HepG2 (cell line): ENCODE measurements at regions of chrX and their contacts with region 1.

Region 1: GRCh38 chrX:108537005-108537404 is 97.4 kb downstream of the COL4A5 start:
- DNase-seq: peak; percentile 22
- ATAC-seq: no peak
- H3K4me3 ChIP-seq: no peak overlapping the region
- H3K27ac ChIP-seq: no peak overlapping the region
- H3K4me1 ChIP-seq: no peaks in the 10 kb centered on the region
- H3K27me3 ChIP-seq: no peaks in the 10 kb centered on the region
- CTCF ChIP-seq: peak; percentile 62
- EP300 ChIP-seq: no peak
- POLR2A ChIP-seq: no peak
- RAD21 ChIP-seq: peak; percentile 40

Region 2: GRCh38 chrX:108224727-108225621 is 312.0 kb before region 1 on chrX:
- CTCF ChIA-PET with region 1: interaction called, 4 read pairs
- POLR2A ChIA-PET with region 1: no interaction called
- in situ Hi-C with region 1: loop called (anchors 10 kb)
- intact Hi-C with region 1: loop called (anchors 1 kb)
- DNase-seq: peak; percentile 37
- ATAC-seq: peak; percentile 64
- H3K4me3 ChIP-seq: no peak overlapping the region
- H3K27ac ChIP-seq: no peak overlapping the region
- H3K4me1 ChIP-seq: no peaks in the 10 kb centered on the region
- H3K27me3 ChIP-seq: no peaks in the 10 kb centered on the region
- CTCF ChIP-seq: peak; percentile 75
- EP300 ChIP-seq: no peak
- POLR2A ChIP-seq: no peak
- RAD21 ChIP-seq: 0 out of 2 replicates have a peak, but pooled peaks have one; percentile 36

Region 3: GRCh38 chrX:108292053-108292452 is 245.0 kb before region 1 on chrX:
- CTCF ChIA-PET with region 1: no interaction called
- POLR2A ChIA-PET with region 1: no interaction called
- in situ Hi-C with region 1: no loop called
- intact Hi-C with region 1: no loop called
- DNase-seq: no peak
- ATAC-seq: no peak
- H3K4me3 ChIP-seq: no peak overlapping the region
- H3K27ac ChIP-seq: no peak overlapping the region
- H3K4me1 ChIP-seq: peaks cover 6% of the 10 kb centered on the region
- H3K27me3 ChIP-seq: no peaks in the 10 kb centered on the region
- CTCF ChIP-seq: no peak
- EP300 ChIP-seq: no peak
- POLR2A ChIP-seq: no peak
- RAD21 ChIP-seq: no peak

Region 4: GRCh38 chrX:108304210-108304609 is 232.8 kb before region 1 on chrX:
- CTCF ChIA-PET with region 1: no interaction called
- POLR2A ChIA-PET with region 1: no interaction called
- in situ Hi-C with region 1: no loop called
- intact Hi-C with region 1: loop called (anchors 2 kb)
- DNase-seq: no peak
- ATAC-seq: no peak
- H3K4me3 ChIP-seq: no peak overlapping the region
- H3K27ac ChIP-seq: no peak overlapping the region
- H3K4me1 ChIP-seq: peaks cover 46% of the 10 kb centered on the region
- H3K27me3 ChIP-seq: no peaks in the 10 kb centered on the region
- CTCF ChIP-seq: peak; percentile 62
- EP300 ChIP-seq: no peak
- POLR2A ChIP-seq: no peak
- RAD21 ChIP-seq: no peak

Region 5: GRCh38 chrX:108601266-108601665 is 64.3 kb after region 1 on chrX:
- CTCF ChIA-PET with region 1: no interaction called
- POLR2A ChIA-PET with region 1: no interaction called
- in situ Hi-C with region 1: no loop called
- intact Hi-C with region 1: no loop called
- DNase-seq: no peak
- ATAC-seq: no peak
- H3K4me3 ChIP-seq: no peak overlapping the region
- H3K27ac ChIP-seq: no peak overlapping the region
- H3K4me1 ChIP-seq: no peaks in the 10 kb centered on the region
- H3K27me3 ChIP-seq: no peaks in the 10 kb centered on the region
- CTCF ChIP-seq: no peak
- EP300 ChIP-seq: no peak
- POLR2A ChIP-seq: no peak
- RAD21 ChIP-seq: no peak

Region 6: GRCh38 chrX:108641589-108642272 is 104.7 kb after region 1 on chrX:
- CTCF ChIA-PET with region 1: no interaction called
- POLR2A ChIA-PET with region 1: no interaction called
- in situ Hi-C with region 1: no loop called
- intact Hi-C with region 1: no loop called
- DNase-seq: no peak
- ATAC-seq: no peak
- H3K4me3 ChIP-seq: no peak overlapping the region
- H3K27ac ChIP-seq: no peak overlapping the region
- H3K4me1 ChIP-seq: no peaks in the 10 kb centered on the region
- H3K27me3 ChIP-seq: no peaks in the 10 kb centered on the region
- CTCF ChIP-seq: no peak
- EP300 ChIP-seq: no peak
- POLR2A ChIP-seq: no peak
- RAD21 ChIP-seq: no peak

Region 7: GRCh38 chrX:109089359-109089758 is 552.4 kb after region 1 on chrX:
- CTCF ChIA-PET with region 1: no interaction called
- POLR2A ChIA-PET with region 1: no interaction called
- in situ Hi-C with region 1: no loop called
- intact Hi-C with region 1: no loop called
- DNase-seq: no peak
- ATAC-seq: no peak
- H3K4me3 ChIP-seq: no peak overlapping the region
- H3K27ac ChIP-seq: no peak overlapping the region
- H3K4me1 ChIP-seq: no peaks in the 10 kb centered on the region
- H3K27me3 ChIP-seq: no peaks in the 10 kb centered on the region
- CTCF ChIP-seq: no peak
- EP300 ChIP-seq: no peak
- POLR2A ChIP-seq: no peak
- RAD21 ChIP-seq: no peak